ENCODE measurements at regions of chr11 and their contacts with region 1.

Region 1: DNA sequence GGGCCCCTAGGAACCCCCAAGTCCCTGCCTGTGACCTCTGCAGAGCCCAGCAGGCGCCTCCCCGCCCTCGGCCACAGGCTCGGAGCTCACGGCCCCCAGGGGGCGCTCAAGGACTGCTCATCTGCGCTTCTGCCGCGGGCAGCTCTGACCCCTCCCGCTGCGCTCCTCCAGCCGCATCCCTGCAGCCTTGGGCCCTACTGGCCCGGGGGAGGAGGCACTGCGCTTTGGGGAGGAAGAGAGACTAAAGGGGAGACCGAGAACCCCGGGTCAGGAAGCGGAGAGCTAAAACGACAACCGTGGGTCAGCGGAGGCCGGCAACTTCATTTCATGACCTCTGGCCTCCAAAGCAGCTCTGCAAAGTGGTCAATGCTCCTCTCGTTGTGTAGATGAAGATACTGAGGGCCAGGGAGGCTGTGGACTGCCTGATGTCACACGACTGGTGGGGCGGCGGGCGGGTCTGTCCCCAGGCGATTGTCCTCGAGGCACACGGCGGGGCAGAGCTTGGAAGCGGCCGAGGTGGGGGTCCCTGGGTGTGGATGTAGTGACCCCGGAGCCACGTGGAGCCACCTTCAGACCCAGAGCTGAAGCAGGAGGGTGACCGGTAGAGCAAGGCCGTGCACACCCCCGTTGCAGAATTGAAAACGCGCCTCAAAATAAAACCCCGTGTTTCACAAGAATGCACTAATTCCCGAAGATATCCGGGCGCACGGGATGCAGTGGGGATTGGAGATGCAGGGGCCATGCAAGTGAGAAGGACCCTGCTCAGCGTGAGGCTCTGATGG is 2.7 kb upstream of the KRTAP5-6 start:
- DNase-seq: peak; percentile 63 to 82 (median 73)
- H3K4me3 ChIP-seq: no peak overlapping the region
- H3K4me3 Mint-ChIP-seq: no peak overlapping the region
- H3K27ac ChIP-seq: no peak overlapping the region
- H3K27ac Mint-ChIP-seq: peak overlapping the region in 1 of 8 donors; percentile 43
- H3K4me1 ChIP-seq: peaks cover 13% of the 10 kb centered on the region
- H3K4me1 Mint-ChIP-seq: peaks cover 4 to 9% (median 7%) of the 10 kb centered on the region in 3 donors
- H3K27me3 ChIP-seq: peaks cover 4% of the 10 kb centered on the region
- H3K27me3 Mint-ChIP-seq: peaks cover 17 to 43% of the 10 kb centered on the region in 2 donors

Region 2: GRCh38 chr11:1660081-1660867 is 34.0 kb before region 1 on chr11:
- CTCF ChIA-PET with region 1: no interaction called
- POLR2A ChIA-PET with region 1: no interaction called
- DNase-seq: no peak
- H3K4me3 ChIP-seq: no peak overlapping the region
- H3K4me3 Mint-ChIP-seq: peak overlapping the region in 3 of 7 donors; percentile 10 to 56 (median 38)
- H3K27ac ChIP-seq: no peak overlapping the region
- H3K27ac Mint-ChIP-seq: no peak overlapping the region
- H3K4me1 ChIP-seq: peaks cover 10% of the 10 kb centered on the region
- H3K4me1 Mint-ChIP-seq: peaks cover 0 to 18% (median 10%) of the 10 kb centered on the region in 3 donors
- H3K27me3 ChIP-seq: peaks cover 9% of the 10 kb centered on the region
- H3K27me3 Mint-ChIP-seq: peaks cover 26 to 49% of the 10 kb centered on the region in 2 donors

Region 3: GRCh38 chr11:1682225-1682905 is 11.9 kb before region 1 on chr11:
- CTCF ChIA-PET with region 1: interaction called, 43 read pairs
- POLR2A ChIA-PET with region 1: no interaction called
- DNase-seq: no peak
- H3K4me3 ChIP-seq: no peak overlapping the region
- H3K4me3 Mint-ChIP-seq: no peak overlapping the region
- H3K27ac ChIP-seq: no peak overlapping the region
- H3K27ac Mint-ChIP-seq: no peak overlapping the region
- H3K4me1 ChIP-seq: no peaks in the 10 kb centered on the region
- H3K4me1 Mint-ChIP-seq: no peaks in the 10 kb centered on the region
- H3K27me3 ChIP-seq: no peaks in the 10 kb centered on the region
- H3K27me3 Mint-ChIP-seq: peaks cover 8 to 17% of the 10 kb centered on the region in 2 donors

Region 4: GRCh38 chr11:1772270-1773130 is 78.2 kb after region 1 on chr11:
- CTCF ChIA-PET with region 1: interaction called, 10 read pairs
- POLR2A ChIA-PET with region 1: no interaction called
- DNase-seq: peak in 4 of 5 donors; percentile 20 to 73 (median 34)
- H3K4me3 ChIP-seq: no peak overlapping the region
- H3K4me3 Mint-ChIP-seq: peak overlapping the region; percentile 29 to 89 (median 55)
- H3K27ac ChIP-seq: no peak overlapping the region
- H3K27ac Mint-ChIP-seq: peak overlapping the region in 7 of 8 donors; percentile 1 to 93 (median 24)
- H3K4me1 ChIP-seq: peaks cover 11% of the 10 kb centered on the region
- H3K4me1 Mint-ChIP-seq: peaks cover 10 to 18% (median 16%) of the 10 kb centered on the region in 3 donors
- H3K27me3 ChIP-seq: no peaks in the 10 kb centered on the region
- H3K27me3 Mint-ChIP-seq: peaks cover 0 to 4% of the 10 kb centered on the region in 2 donors

Region 5: DNA sequence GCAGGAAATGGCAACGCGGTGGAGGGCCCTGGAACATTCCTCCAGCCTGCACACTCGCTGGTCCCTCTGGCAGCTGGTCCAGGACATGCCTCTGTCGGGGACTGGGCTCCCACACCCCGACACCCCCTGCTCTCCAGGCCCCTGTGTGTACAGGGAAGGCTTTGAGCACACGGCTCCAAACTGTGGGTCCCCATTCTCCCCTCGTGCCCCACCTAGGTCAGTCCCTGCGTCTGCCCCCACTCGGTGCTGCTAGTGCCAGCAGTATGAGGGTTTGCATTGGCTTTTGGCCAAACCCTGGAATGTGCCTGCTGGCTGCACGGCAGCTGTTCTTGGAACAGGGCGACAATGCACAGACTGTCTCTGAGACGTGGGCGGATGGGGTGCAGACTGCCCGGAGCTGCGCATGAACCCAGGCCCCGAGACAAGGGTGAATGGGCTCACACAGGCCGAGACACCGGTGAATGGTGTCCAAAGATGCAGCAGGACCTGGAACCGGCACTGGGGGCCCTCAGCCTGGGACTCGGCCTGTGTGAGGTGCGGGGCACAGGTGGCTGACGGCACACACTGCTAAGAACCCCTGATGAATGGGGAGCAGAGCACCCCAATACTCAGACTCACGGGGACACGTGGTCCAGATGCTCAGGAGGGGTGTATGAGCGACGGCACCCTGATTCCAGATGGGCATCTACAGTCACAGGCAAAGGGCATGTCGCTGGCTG is 133.0 kb after region 1 on chr11:
- CTCF ChIA-PET with region 1: interaction called, 286 read pairs
- POLR2A ChIA-PET with region 1: interaction called, 14 read pairs
- DNase-seq: peak in 1 of 5 donors; percentile 33
- H3K4me3 ChIP-seq: no peak overlapping the region
- H3K4me3 Mint-ChIP-seq: no peak overlapping the region
- H3K27ac ChIP-seq: no peak overlapping the region
- H3K27ac Mint-ChIP-seq: no peak overlapping the region
- H3K4me1 ChIP-seq: no peaks in the 10 kb centered on the region
- H3K4me1 Mint-ChIP-seq: peaks cover 0 to 2% (median 0%) of the 10 kb centered on the region in 3 donors
- H3K27me3 ChIP-seq: no peaks in the 10 kb centered on the region
- H3K27me3 Mint-ChIP-seq: peaks cover 9 to 12% of the 10 kb centered on the region in 2 donors

Region 6: GRCh38 chr11:1837171-1838076 is 143.2 kb after region 1 on chr11:
- CTCF ChIA-PET with region 1: interaction called, 286 read pairs
- POLR2A ChIA-PET with region 1: interaction called, 14 read pairs
- DNase-seq: peak; percentile 75 to 92 (median 80)
- H3K4me3 ChIP-seq: no peak overlapping the region
- H3K4me3 Mint-ChIP-seq: peak overlapping the region in 1 of 7 donors; percentile 34
- H3K27ac ChIP-seq: no peak overlapping the region
- H3K27ac Mint-ChIP-seq: peak overlapping the region in 1 of 8 donors; percentile 50
- H3K4me1 ChIP-seq: peaks cover 13% of the 10 kb centered on the region
- H3K4me1 Mint-ChIP-seq: peaks cover 6 to 23% (median 8%) of the 10 kb centered on the region in 3 donors
- H3K27me3 ChIP-seq: no peaks in the 10 kb centered on the region
- H3K27me3 Mint-ChIP-seq: peaks cover 3 to 6% of the 10 kb centered on the region in 2 donors

Region 7: DNA sequence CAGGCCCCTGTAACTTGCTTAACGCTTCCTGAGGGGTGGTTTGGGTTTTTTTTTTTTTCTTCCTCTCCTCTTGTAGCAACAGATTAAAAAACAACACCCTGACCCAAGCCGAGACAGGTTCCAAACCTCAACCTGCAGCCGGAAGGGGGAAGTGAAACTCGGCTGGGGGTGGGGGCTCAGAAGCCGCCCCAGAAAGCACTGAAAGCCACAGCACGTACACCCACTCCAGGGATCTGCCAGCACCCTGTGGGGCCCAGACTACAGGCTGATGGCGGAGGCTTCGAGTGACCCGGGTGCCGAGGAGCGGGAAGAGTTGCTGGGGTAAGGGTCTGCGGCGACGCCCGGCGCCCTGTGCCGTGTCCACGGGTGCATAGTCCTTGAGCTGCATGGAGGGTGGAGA is 158.6 kb after region 1 on chr11 and contains the start of gene LSP1:
- CTCF ChIA-PET with region 1: interaction called, 36 read pairs
- POLR2A ChIA-PET with region 1: no interaction called
- DNase-seq: peak; percentile 69 to 93 (median 87)
- H3K4me3 ChIP-seq: peak within 1 kb of the TSS; percentile 63
- H3K4me3 Mint-ChIP-seq: peak within 1 kb of the TSS; percentile 92 to 99 (median 99)
- H3K27ac ChIP-seq: peak within 1 kb of the TSS; percentile 74
- H3K27ac Mint-ChIP-seq: peak within 1 kb of the TSS; percentile 90 to 100 (median 98)
- H3K4me1 ChIP-seq: peaks cover 81% of the 10 kb centered on the region
- H3K4me1 Mint-ChIP-seq: peaks cover 50 to 73% (median 55%) of the 10 kb centered on the region in 3 donors
- H3K27me3 ChIP-seq: no peaks in the 10 kb centered on the region
- H3K27me3 Mint-ChIP-seq: no peaks in the 10 kb centered on the region
- total RNA-seq, gene LSP1: 226 to 230 TPM

Region 8: GRCh38 chr11:2151500-2152257 is 457.4 kb after region 1 on chr11:
- CTCF ChIA-PET with region 1: interaction called, 85 read pairs
- POLR2A ChIA-PET with region 1: interaction called, 3 read pairs
- DNase-seq: peak; percentile 67 to 86 (median 71)
- H3K4me3 ChIP-seq: peak overlapping the region; percentile 23
- H3K4me3 Mint-ChIP-seq: peak overlapping the region in 6 of 7 donors; percentile 30 to 81 (median 58)
- H3K27ac ChIP-seq: no peak overlapping the region
- H3K27ac Mint-ChIP-seq: peak overlapping the region in 3 of 8 donors; percentile 51 to 79 (median 61)
- H3K4me1 ChIP-seq: peaks cover 6% of the 10 kb centered on the region
- H3K4me1 Mint-ChIP-seq: peaks cover 7 to 8% (median 7%) of the 10 kb centered on the region in 3 donors
- H3K27me3 ChIP-seq: peaks cover 13% of the 10 kb centered on the region
- H3K27me3 Mint-ChIP-seq: peaks cover 24 to 32% of the 10 kb centered on the region in 2 donors

Region 9: GRCh38 chr11:2462908-2463765 is 768.9 kb after region 1 on chr11:
- CTCF ChIA-PET with region 1: no interaction called
- POLR2A ChIA-PET with region 1: no interaction called
- DNase-seq: peak in 1 of 5 donors; percentile 22
- H3K4me3 ChIP-seq: no peak overlapping the region
- H3K4me3 Mint-ChIP-seq: peak overlapping the region in 2 of 7 donors; percentile 36 to 69
- H3K27ac ChIP-seq: no peak overlapping the region
- H3K27ac Mint-ChIP-seq: peak overlapping the region in 2 of 8 donors; percentile 24 to 36
- H3K4me1 ChIP-seq: peaks cover 45% of the 10 kb centered on the region
- H3K4me1 Mint-ChIP-seq: peaks cover 23 to 70% (median 25%) of the 10 kb centered on the region in 3 donors
- H3K27me3 ChIP-seq: no peaks in the 10 kb centered on the region
- H3K27me3 Mint-ChIP-seq: no peaks in the 10 kb centered on the region